Activated CD4-positive, alpha-beta memory T cell treated with anti-CD3 and anti-CD28 coated beads for 36 hours (primary cell): ENCODE measurements at regions of chr7 and their contacts with region 1.

Region 1: DNA sequence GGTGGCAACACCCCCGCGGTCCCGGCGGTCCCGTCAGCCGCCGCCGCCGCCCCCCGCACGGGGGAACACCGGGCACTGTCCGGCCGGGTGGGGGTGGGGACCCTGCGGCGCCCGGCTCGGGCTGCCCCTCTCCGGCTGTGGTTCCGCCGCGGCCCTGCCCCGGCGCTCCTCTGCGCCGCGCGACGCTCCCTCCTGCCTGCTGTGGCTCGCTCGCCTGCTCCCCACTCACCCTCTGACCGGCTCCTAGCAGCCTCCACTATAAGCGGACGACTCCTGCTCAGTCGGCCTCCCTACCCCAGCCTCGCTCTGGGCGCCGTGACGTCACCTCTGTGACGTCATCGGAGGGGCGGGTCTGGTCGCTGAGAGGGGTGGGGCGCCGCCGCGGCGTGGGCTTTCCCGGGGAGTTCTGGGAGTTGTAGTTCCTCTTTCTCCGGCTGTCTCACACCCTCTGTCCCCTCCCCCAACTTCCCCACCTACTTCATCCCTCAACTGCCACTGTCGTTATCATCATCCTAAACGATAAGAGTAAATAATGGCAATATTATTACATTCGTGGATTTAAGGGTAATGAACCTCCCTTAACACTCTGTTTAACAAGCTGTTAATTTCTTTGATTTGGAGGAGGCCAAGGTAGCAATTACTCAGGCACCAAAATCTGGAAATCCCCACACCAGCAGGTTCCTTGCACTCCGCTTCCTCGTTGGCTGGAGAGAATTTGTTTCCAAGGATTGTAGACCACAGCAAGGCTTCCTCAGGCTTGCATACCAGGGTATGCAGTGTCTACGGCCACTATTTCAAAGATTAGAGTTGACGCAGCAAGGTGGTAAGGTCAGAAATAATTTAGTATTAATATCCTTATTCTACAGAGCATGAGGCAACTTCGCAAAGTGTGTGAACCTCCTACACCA is at the start of gene UBE2H:
- DNase-seq: peak; percentile 94
- H3K4me3 Mint-ChIP-seq: peak within 1 kb of the TSS; percentile 87
- H3K27ac Mint-ChIP-seq: peak within 1 kb of the TSS; percentile 90
- H3K4me1 Mint-ChIP-seq: peaks cover 7% of the 10 kb centered on the region
- H3K27me3 Mint-ChIP-seq: no peaks in the 10 kb centered on the region
- total RNA-seq, gene UBE2H: 33.6 to 37.1 TPM

Region 2: DNA sequence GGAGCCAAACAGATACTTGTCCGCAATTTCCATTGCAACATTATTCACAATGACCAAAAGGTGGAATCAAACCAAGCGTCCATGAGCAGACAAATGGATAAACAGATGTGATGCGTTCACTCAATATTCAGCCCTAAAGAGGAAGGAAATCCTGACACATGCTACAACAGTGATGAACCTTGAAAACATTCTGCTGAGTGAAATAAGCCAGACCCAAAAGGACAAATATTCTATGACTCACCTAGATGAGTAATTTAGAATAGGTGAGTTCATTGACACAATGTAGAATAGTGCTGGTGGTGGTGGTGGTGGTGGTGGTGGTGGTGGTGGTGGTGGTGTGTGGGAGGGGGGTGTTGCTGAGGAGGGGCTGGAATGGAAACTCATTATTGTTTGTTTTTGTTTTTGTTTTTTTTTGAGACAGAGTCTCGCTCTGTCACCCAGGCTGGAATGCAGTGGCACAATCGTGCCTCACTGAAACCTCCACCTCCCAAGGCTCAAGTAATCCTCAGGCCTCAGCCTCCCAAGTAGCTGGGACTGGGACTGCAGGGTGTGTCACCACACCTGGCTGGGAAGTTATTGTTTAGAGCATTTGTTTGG is 422.0 kb before region 1 on chr7:
- CTCF ChIA-PET with region 1: no interaction called
- POLR2A ChIA-PET with region 1: no interaction called
- intact Hi-C with region 1: loop called (anchors 1 kb)
- DNase-seq: peak; percentile 86
- H3K4me3 Mint-ChIP-seq: no peak overlapping the region
- H3K27ac Mint-ChIP-seq: peak overlapping the region; percentile 19
- H3K4me1 Mint-ChIP-seq: peaks cover 9% of the 10 kb centered on the region
- H3K27me3 Mint-ChIP-seq: peaks cover 11% of the 10 kb centered on the region

Region 3: GRCh38 chr7:129845178-129845971 is 107.5 kb before region 1 on chr7:
- CTCF ChIA-PET with region 1: no interaction called
- POLR2A ChIA-PET with region 1: interaction called, 3 read pairs
- intact Hi-C with region 1: loop called (anchors 5 kb)
- DNase-seq: no peak
- H3K4me3 Mint-ChIP-seq: no peak overlapping the region
- H3K27ac Mint-ChIP-seq: no peak overlapping the region
- H3K4me1 Mint-ChIP-seq: peaks cover 50% of the 10 kb centered on the region
- H3K27me3 Mint-ChIP-seq: no peaks in the 10 kb centered on the region

Region 4: DNA sequence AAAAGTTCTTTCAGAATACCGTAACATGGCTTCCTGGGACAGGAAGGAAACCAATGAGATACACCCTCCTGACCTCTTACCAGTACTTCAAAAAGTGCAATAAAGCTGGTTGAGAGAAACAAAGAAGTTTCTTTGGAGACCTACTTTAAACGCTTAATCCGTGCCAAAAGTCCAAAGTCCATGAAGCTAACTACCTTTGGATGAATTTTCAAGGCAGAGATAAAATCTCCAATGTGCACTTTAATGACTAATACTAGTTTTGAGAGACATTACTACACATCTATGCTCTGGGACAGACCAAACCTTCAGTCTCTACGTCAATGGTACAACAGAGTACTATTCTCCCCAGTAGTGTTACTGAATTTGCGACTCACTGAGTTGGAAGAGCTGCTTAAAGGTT is 46.2 kb before region 1 on chr7:
- CTCF ChIA-PET with region 1: interaction called, 4 read pairs
- POLR2A ChIA-PET with region 1: interaction called, 3 read pairs
- intact Hi-C with region 1: loop called (anchors 1 kb)
- DNase-seq: no peak
- H3K4me3 Mint-ChIP-seq: no peak overlapping the region
- H3K27ac Mint-ChIP-seq: peak overlapping the region; percentile 53
- H3K4me1 Mint-ChIP-seq: peaks cover 75% of the 10 kb centered on the region
- H3K27me3 Mint-ChIP-seq: no peaks in the 10 kb centered on the region

Region 5: DNA sequence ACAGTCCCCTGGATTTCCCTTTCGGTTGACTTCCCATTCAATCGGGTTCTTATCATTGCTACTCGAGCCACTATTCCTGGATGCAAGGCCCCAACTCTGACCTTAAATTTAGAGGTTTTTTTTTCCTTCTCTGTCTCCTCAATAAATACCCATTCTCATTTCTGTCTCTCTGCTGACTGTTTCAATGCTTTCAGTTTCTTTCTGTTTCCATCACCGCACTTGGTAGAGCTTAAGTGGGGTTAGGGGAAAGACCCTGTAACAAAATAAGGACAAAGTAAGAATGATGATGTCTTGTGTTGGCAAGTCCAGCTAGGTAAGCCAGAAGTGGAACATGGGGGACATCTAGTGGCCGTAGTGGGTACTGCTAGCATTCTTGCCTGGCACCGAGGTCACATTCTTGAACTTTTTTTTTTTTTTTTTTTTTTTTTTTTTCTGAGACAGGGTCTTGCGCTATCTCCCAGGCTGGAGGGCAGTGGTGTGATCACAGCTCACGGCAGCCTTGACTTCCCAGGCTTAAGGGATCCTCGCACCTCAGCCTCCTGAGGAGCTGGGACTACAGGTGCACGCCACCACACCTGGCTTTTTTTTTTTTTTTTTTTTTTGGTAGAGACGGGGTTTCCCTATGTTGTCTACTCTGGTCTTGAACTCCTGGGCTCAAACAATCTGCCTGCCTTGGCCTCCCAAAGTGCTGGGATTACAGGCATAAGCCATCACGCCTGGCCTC is 57.9 kb after region 1 on chr7:
- CTCF ChIA-PET with region 1: interaction called, 10 read pairs
- POLR2A ChIA-PET with region 1: interaction called, 7 read pairs
- intact Hi-C with region 1: loop called (anchors 1 kb)
- DNase-seq: peak; percentile 94
- H3K4me3 Mint-ChIP-seq: no peak overlapping the region
- H3K27ac Mint-ChIP-seq: peak overlapping the region; percentile 70
- H3K4me1 Mint-ChIP-seq: peaks cover 12% of the 10 kb centered on the region
- H3K27me3 Mint-ChIP-seq: no peaks in the 10 kb centered on the region